Activated naive CD4-positive, alpha-beta T cell treated with anti-CD3 and anti-CD28 coated beads for 36 hours (primary cell): ENCODE measurements at regions of chr20 and their contacts with region 1.

Region 1: GRCh38 chr20:59159493-59160376 is 3.9 kb upstream of the ZNF831 start:
- DNase-seq: peak; percentile 87
- H3K4me3 Mint-ChIP-seq: peak overlapping the region; percentile 90
- H3K27ac Mint-ChIP-seq: peak overlapping the region; percentile 94
- H3K4me1 Mint-ChIP-seq: peaks cover 80% of the 10 kb centered on the region
- H3K27me3 Mint-ChIP-seq: no peaks in the 10 kb centered on the region

Region 2: GRCh38 chr20:57391074-57391554 is 1768.6 kb before region 1 on chr20 and contains the start of gene RBM38:
- CTCF ChIA-PET with region 1: no interaction called
- intact Hi-C with region 1: loop called (anchors 10 kb)
- DNase-seq: peak; percentile 80
- H3K4me3 Mint-ChIP-seq: peak within 1 kb of the TSS; percentile 90
- H3K27ac Mint-ChIP-seq: peak within 1 kb of the TSS; percentile 97
- H3K4me1 Mint-ChIP-seq: peaks cover 46% of the 10 kb centered on the region
- H3K27me3 Mint-ChIP-seq: no peaks in the 10 kb centered on the region
- total RNA-seq, gene RBM38: 60.3 to 63.1 TPM

Region 3: GRCh38 chr20:58892076-58892931 is 267.4 kb before region 1 on chr20:
- CTCF ChIA-PET with region 1: no interaction called
- intact Hi-C with region 1: no loop called
- DNase-seq: peak; percentile 81
- H3K4me3 Mint-ChIP-seq: peak overlapping the region; percentile 94
- H3K27ac Mint-ChIP-seq: peak overlapping the region; percentile 98
- H3K4me1 Mint-ChIP-seq: peaks cover 46% of the 10 kb centered on the region
- H3K27me3 Mint-ChIP-seq: no peaks in the 10 kb centered on the region

Region 4: GRCh38 chr20:59020938-59021551 is 138.7 kb before region 1 on chr20:
- CTCF ChIA-PET with region 1: no interaction called
- intact Hi-C with region 1: no loop called
- DNase-seq: no peak
- H3K4me3 Mint-ChIP-seq: no peak overlapping the region
- H3K27ac Mint-ChIP-seq: no peak overlapping the region
- H3K4me1 Mint-ChIP-seq: peaks cover 33% of the 10 kb centered on the region
- H3K27me3 Mint-ChIP-seq: no peaks in the 10 kb centered on the region

Region 5: DNA sequence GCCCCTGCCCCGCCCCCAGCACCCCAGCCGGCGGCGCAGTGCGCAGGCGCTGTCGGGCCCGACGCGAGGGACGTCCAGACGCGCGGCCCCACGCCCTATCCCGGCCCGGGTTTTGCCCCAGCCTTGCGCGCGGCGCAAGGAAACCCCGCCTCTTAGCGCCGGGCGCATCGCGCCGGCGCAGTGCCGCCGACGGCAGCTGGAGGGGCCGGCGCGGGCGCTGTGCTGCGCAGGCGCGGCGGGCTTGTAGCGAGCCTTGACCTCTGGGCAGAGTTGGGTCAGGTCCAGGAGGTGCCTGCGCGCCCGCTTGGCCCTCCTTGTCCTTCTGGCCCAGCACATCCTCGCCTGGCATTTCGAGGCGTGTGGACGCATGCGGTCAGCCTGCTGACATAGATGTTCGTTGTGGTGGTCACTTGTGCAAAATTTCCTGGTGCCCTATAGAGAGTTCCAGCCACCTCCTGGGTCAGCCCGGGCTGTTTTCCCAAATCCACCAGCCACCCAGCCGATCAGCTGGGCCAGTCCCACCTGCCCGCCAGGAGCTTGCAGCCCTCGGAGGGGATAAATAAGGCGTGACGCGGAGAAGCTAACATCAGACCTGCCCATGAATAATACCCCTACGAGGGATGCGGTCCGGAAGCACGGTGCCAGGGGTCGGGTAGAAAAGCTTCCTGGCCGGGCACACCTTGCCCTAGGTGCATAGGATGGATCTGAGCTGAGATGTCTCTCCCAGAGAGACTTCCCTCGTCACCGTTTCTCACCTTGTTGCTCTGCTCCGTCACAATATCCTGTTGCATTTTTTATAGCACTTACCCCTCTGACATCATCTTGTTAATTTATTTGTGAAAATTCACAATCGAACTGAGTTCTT is 116.7 kb before region 1 on chr20:
- CTCF ChIA-PET with region 1: no interaction called
- intact Hi-C with region 1: loop called (anchors 1 kb)
- DNase-seq: peak; percentile 92
- H3K4me3 Mint-ChIP-seq: peak overlapping the region; percentile 93
- H3K27ac Mint-ChIP-seq: peak overlapping the region; percentile 84
- H3K4me1 Mint-ChIP-seq: peaks cover 40% of the 10 kb centered on the region
- H3K27me3 Mint-ChIP-seq: no peaks in the 10 kb centered on the region

Region 6: GRCh38 chr20:59105581-59105980 is 54.2 kb before region 1 on chr20:
- CTCF ChIA-PET with region 1: no interaction called
- intact Hi-C with region 1: no loop called
- DNase-seq: no peak
- H3K4me3 Mint-ChIP-seq: no peak overlapping the region
- H3K27ac Mint-ChIP-seq: no peak overlapping the region
- H3K4me1 Mint-ChIP-seq: peaks cover 17% of the 10 kb centered on the region
- H3K27me3 Mint-ChIP-seq: no peaks in the 10 kb centered on the region

Region 7: GRCh38 chr20:59120491-59120890 is 39.2 kb before region 1 on chr20:
- CTCF ChIA-PET with region 1: interaction called, 9 read pairs
- intact Hi-C with region 1: loop called (anchors 1 kb)
- DNase-seq: peak; percentile 59
- H3K4me3 Mint-ChIP-seq: no peak overlapping the region
- H3K27ac Mint-ChIP-seq: no peak overlapping the region
- H3K4me1 Mint-ChIP-seq: peaks cover 75% of the 10 kb centered on the region
- H3K27me3 Mint-ChIP-seq: no peaks in the 10 kb centered on the region

Region 8: GRCh38 chr20:59177261-59178250 is 17.8 kb after region 1 on chr20:
- CTCF ChIA-PET with region 1: interaction called, 11 read pairs
- intact Hi-C with region 1: loop called (anchors 2 kb)
- DNase-seq: peak; percentile 67
- H3K4me3 Mint-ChIP-seq: peak overlapping the region; percentile 52
- H3K27ac Mint-ChIP-seq: peak overlapping the region; percentile 91
- H3K4me1 Mint-ChIP-seq: peaks cover 81% of the 10 kb centered on the region
- H3K27me3 Mint-ChIP-seq: no peaks in the 10 kb centered on the region

Region 9: DNA sequence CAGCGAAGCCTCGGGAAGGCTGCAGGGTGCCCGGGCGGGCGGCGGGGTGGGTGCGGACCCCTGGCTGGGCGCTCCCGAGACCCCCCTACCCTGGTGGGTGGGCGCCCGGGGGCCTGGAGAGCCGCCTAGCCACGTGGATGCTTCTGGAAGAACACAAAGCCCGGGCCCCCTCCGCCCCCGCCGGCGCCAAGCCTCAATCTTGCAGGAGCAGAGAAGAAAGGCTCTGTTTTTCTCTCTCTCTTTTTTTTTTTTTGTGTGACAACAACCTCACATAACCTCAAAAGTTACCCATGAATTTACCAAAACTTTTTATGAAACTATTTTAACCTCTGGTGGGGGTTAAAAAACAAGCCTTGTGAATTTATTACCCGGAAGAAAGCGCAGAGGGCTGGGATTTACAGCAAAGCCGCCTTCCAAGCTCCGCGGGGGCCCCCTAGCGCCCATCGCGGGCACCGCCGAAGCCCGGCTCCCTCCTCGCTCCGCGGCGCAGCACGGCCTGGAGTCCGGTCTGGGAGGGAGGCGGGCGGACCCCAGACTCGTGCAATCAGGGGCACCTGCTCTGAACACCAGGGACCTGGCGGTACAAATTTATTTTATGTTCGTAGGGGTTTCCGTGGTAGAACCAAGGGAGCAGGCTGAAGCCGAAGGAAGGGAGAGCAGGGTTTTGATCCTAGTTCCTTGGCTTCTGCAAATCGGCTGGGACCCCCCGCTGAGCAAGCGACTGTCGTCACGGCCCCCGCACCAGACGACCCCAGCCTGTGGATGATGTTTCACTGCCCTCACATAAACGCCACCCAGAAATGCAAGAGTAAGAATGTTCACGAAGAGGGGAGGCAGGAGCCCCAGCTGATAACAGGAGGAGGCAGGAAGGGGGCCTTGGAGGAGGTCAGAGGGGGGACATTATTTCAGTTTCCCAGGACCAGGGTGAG is 62.8 kb after region 1 on chr20:
- CTCF ChIA-PET with region 1: no interaction called
- intact Hi-C with region 1: loop called (anchors 1 kb)
- DNase-seq: peak; percentile 86
- H3K4me3 Mint-ChIP-seq: peak overlapping the region; percentile 69
- H3K27ac Mint-ChIP-seq: peak overlapping the region; percentile 37
- H3K4me1 Mint-ChIP-seq: peaks cover 21% of the 10 kb centered on the region
- H3K27me3 Mint-ChIP-seq: no peaks in the 10 kb centered on the region

Region 10: GRCh38 chr20:59253779-59254319 is 94.1 kb after region 1 on chr20:
- CTCF ChIA-PET with region 1: interaction called, 4 read pairs
- intact Hi-C with region 1: loop called (anchors 5 kb)
- DNase-seq: peak; percentile 64
- H3K4me3 Mint-ChIP-seq: peak overlapping the region; percentile 16
- H3K27ac Mint-ChIP-seq: peak overlapping the region; percentile 92
- H3K4me1 Mint-ChIP-seq: peaks cover 50% of the 10 kb centered on the region
- H3K27me3 Mint-ChIP-seq: no peaks in the 10 kb centered on the region